Right ventricle myocardium inferior (tissue), 1 donor: ENCODE measurements at regions of chr12 and their contacts with region 1.

Region 1: DNA sequence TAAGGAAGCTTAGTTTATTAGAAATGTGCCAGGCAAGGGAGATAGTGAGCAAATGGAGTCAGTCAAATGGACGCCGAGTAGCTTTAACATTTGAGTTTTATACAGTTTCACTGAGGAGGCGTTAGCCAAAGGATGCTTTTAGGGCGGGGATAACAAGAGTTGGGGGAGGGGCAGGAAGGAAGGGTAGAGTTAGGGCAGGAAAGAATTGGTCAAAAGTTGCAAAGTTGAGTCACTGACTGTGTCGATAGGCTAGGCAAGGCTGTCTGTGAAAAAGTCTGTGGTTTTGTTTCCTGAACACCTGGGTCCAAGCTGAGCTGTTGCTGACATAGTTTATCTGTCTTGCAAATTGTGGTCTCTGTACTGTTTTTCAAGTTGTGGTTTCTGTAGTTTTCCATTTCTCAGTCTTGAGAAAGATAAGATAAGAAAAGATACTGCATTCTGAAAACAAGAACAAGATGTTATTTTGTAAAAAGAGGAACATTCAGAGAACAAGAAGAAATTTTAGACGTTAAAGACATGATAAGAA is 62.6 kb upstream of the RESF1 start:
- DNase-seq: no peak
- ATAC-seq: peak; percentile 83

Region 2: DNA sequence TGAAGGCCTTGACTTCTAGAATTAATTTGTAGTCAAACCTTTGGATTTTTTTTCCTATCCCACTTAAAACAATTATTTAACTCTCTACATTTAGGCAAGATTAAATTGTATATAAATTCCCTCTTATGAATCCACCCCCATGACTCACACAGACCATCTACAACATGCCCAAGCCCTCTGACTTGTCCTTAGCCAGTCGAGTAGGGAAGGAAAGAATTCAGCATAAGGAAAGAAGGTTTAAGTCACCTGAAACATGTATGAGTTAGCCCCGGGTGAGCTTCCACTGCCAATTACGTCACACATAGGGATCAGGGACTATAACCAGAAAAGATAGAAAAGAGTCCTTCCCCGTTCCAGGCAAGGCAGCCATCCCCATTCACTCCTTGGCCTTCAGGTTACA is 47.7 kb after region 1 on chr12:
- intact Hi-C with region 1: loop called (anchors 10 kb)
- DNase-seq: no peak
- ATAC-seq: no peak